Right cardiac atrium (tissue), 5 donors: ENCODE measurements at regions of chr3 and their contacts with region 1.

Region 1: GRCh38 chr3:72265256-72266015 is 480.5 kb upstream of the PROK2 start:
- DNase-seq: no peak
- ATAC-seq: no peak
- H3K4me3 ChIP-seq: no peak overlapping the region
- H3K27ac ChIP-seq: no peak overlapping the region
- H3K4me1 ChIP-seq: peaks cover 1% of the 10 kb centered on the region
- H3K27me3 ChIP-seq: no peaks in the 10 kb centered on the region

Region 2: GRCh38 chr3:71955240-71956068 is 310.0 kb before region 1 on chr3:
- intact Hi-C with region 1: loop called in 1 of 4 experiments (anchors 10 kb)
- DNase-seq: peak; percentile 69 to 90 (median 86)
- ATAC-seq: peak; percentile 68 to 76
- H3K4me3 ChIP-seq: no peak overlapping the region
- H3K27ac ChIP-seq: no peak overlapping the region
- H3K4me1 ChIP-seq: peaks cover 2% of the 10 kb centered on the region
- H3K27me3 ChIP-seq: no peaks in the 10 kb centered on the region

Region 3: DNA sequence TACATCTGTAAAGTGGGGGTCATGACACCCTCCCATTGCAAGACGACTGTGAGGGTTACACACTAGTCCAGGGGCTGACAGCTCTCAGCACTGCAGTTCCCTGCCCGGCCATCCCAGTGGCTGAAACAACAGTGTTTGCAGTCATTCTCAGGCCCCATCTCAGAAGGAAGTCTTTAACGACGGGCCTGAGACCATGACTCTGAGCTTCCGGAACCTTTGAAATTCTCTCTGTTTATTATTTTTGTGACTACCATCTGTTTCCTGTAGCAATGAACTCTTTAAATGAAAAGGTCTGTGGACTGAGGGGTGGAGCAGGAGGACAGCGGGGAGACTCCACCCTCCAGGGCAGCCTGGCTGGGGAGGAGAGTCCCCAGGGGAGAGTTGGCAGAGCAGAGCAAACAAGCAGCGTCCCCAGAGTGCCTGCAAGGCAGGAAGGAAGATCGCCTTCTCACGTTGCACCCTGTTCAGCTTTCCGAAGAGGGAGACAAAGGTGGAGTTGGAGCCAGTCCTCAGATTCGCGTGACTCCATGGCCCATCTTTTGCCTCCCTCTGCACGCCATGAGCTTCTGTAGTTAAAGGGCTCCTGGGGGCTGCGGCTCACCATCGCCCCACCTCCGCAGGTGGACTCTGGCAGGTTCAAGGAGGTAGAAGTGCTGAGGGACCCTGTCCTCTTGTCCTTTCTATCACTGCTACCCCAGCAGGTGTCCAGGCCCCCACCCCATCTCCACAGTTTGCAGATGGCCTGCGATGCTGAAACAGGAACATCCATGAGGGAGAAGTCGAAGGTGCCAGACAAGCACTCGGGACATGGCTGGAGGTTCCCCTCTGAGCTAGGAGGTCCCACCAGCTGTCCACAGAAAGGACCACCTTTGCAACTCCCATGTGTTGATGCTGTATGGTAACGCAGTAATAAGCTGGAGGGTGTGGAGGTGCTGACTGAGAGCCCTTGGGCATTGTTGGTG is 45.3 kb after region 1 on chr3:
- intact Hi-C with region 1: no loop called
- DNase-seq: peak in 2 of 3 donors; percentile 59 to 69
- ATAC-seq: peak; percentile 84 to 95
- H3K4me3 ChIP-seq: no peak overlapping the region
- H3K27ac ChIP-seq: peak overlapping the region; percentile 34
- H3K4me1 ChIP-seq: peaks cover 5% of the 10 kb centered on the region
- H3K27me3 ChIP-seq: no peaks in the 10 kb centered on the region